Naive thymus-derived CD4-positive, alpha-beta T cell (primary cell): ENCODE measurements at regions of chr6 and their contacts with region 1.

Region 1: GRCh38 chr6:149368065-149368464 is 32.0 kb upstream of the SUMO4 start:
- DNase-seq: no peak
- ATAC-seq: no peak
- H3K4me3 ChIP-seq: no peak overlapping the region
- H3K4me3 Mint-ChIP-seq: no peak overlapping the region
- H3K27ac ChIP-seq: peak overlapping the region; percentile 21
- H3K27ac Mint-ChIP-seq: no peak overlapping the region
- H3K4me1 ChIP-seq: peaks cover 40 to 57% of the 10 kb centered on the region in 2 donors
- H3K4me1 Mint-ChIP-seq: peaks cover 28 to 44% (median 30%) of the 10 kb centered on the region in 7 donors
- H3K27me3 ChIP-seq: no peaks in the 10 kb centered on the region
- H3K27me3 Mint-ChIP-seq: no peaks in the 10 kb centered on the region

Region 2: DNA sequence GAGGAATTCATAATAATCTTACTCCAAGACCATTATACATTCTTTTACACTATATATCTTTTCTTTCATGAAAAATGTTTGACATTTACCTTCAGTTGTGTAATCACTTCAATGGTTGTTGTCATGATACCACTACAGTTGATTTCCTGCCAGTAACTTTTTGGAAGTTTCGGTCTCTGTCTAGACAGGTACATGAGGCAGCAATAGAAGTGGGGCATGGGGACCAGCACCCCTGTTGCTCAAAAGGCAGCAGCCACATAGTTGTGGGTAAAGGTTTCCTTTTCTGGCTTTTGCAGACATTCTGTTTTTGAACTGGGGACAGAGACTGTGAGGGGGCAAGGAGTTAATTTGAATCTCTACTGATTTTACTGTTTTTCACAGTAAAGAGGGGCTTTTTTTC is 1845.5 kb before region 1 on chr6:
- CTCF ChIA-PET with region 1: no interaction called
- POLR2A ChIA-PET with region 1: no interaction called
- intact Hi-C with region 1: no loop called
- DNase-seq: no peak
- ATAC-seq: no peak
- H3K4me3 ChIP-seq: no peak overlapping the region
- H3K4me3 Mint-ChIP-seq: no peak overlapping the region
- H3K27ac ChIP-seq: no peak overlapping the region
- H3K27ac Mint-ChIP-seq: no peak overlapping the region
- H3K4me1 ChIP-seq: no peaks in the 10 kb centered on the region
- H3K4me1 Mint-ChIP-seq: peaks cover 0 to 2% (median 0%) of the 10 kb centered on the region in 7 donors
- H3K27me3 ChIP-seq: peaks cover 0 to 6% of the 10 kb centered on the region in 2 donors
- H3K27me3 Mint-ChIP-seq: peaks cover 5 to 39% (median 30%) of the 10 kb centered on the region in 5 donors

Region 3: GRCh38 chr6:149306967-149307366 is 61.1 kb before region 1 on chr6:
- CTCF ChIA-PET with region 1: no interaction called
- POLR2A ChIA-PET with region 1: no interaction called
- intact Hi-C with region 1: no loop called
- DNase-seq: no peak
- ATAC-seq: no peak
- H3K4me3 ChIP-seq: no peak overlapping the region
- H3K4me3 Mint-ChIP-seq: no peak overlapping the region
- H3K27ac ChIP-seq: no peak overlapping the region
- H3K27ac Mint-ChIP-seq: no peak overlapping the region
- H3K4me1 ChIP-seq: no peaks in the 10 kb centered on the region
- H3K4me1 Mint-ChIP-seq: peaks cover 0 to 8% (median 0%) of the 10 kb centered on the region in 7 donors
- H3K27me3 ChIP-seq: no peaks in the 10 kb centered on the region
- H3K27me3 Mint-ChIP-seq: no peaks in the 10 kb centered on the region

Region 4: GRCh38 chr6:149342525-149342924 is 25.5 kb before region 1 on chr6:
- CTCF ChIA-PET with region 1: interaction called, 3 read pairs
- POLR2A ChIA-PET with region 1: interaction called, 4 read pairs
- intact Hi-C with region 1: loop called in 1 of 2 experiments (anchors 2 kb)
- DNase-seq: no peak
- ATAC-seq: peak; percentile 37
- H3K4me3 ChIP-seq: no peak overlapping the region
- H3K4me3 Mint-ChIP-seq: peak overlapping the region in 7 of 10 donors; percentile 4 to 69 (median 35)
- H3K27ac ChIP-seq: no peak overlapping the region
- H3K27ac Mint-ChIP-seq: peak overlapping the region in 7 of 9 donors; percentile 58 to 80 (median 71)
- H3K4me1 ChIP-seq: peaks cover 24 to 30% of the 10 kb centered on the region in 2 donors
- H3K4me1 Mint-ChIP-seq: peaks cover 47 to 94% (median 86%) of the 10 kb centered on the region in 7 donors
- H3K27me3 ChIP-seq: no peaks in the 10 kb centered on the region
- H3K27me3 Mint-ChIP-seq: no peaks in the 10 kb centered on the region

Region 5: GRCh38 chr6:149357726-149358538 is 10.1 kb before region 1 on chr6:
- CTCF ChIA-PET with region 1: no interaction called
- POLR2A ChIA-PET with region 1: no interaction called
- intact Hi-C with region 1: loop called in 1 of 2 experiments (anchors 1 kb)
- DNase-seq: no peak
- ATAC-seq: no peak
- H3K4me3 ChIP-seq: no peak overlapping the region
- H3K4me3 Mint-ChIP-seq: peak overlapping the region in 7 of 10 donors; percentile 1 to 52 (median 34)
- H3K27ac ChIP-seq: no peak overlapping the region
- H3K27ac Mint-ChIP-seq: peak overlapping the region in 7 of 9 donors; percentile 1 to 79 (median 64)
- H3K4me1 ChIP-seq: peaks cover 12 to 18% of the 10 kb centered on the region in 2 donors
- H3K4me1 Mint-ChIP-seq: peaks cover 39 to 86% (median 75%) of the 10 kb centered on the region in 7 donors
- H3K27me3 ChIP-seq: no peaks in the 10 kb centered on the region
- H3K27me3 Mint-ChIP-seq: no peaks in the 10 kb centered on the region

Region 6: GRCh38 chr6:149385998-149386646 is 18.1 kb after region 1 on chr6:
- CTCF ChIA-PET with region 1: no interaction called
- POLR2A ChIA-PET with region 1: interaction called, 3 read pairs
- intact Hi-C with region 1: loop called in 1 of 2 experiments (anchors 2 kb)
- DNase-seq: peak in 1 of 9 donors; percentile 8
- ATAC-seq: peak; percentile 44
- H3K4me3 ChIP-seq: no peak overlapping the region
- H3K4me3 Mint-ChIP-seq: peak overlapping the region in 4 of 10 donors; percentile 15 to 45 (median 34)
- H3K27ac ChIP-seq: no peak overlapping the region
- H3K27ac Mint-ChIP-seq: peak overlapping the region in 5 of 9 donors; percentile 2 to 65 (median 53)
- H3K4me1 ChIP-seq: peaks cover 0 to 6% of the 10 kb centered on the region in 2 donors
- H3K4me1 Mint-ChIP-seq: peaks cover 25 to 75% (median 61%) of the 10 kb centered on the region in 7 donors
- H3K27me3 ChIP-seq: no peaks in the 10 kb centered on the region
- H3K27me3 Mint-ChIP-seq: no peaks in the 10 kb centered on the region

Region 7: GRCh38 chr6:149400050-149400449 is 32.0 kb after region 1 on chr6 and contains the start of gene SUMO4:
- CTCF ChIA-PET with region 1: no interaction called
- POLR2A ChIA-PET with region 1: no interaction called
- intact Hi-C with region 1: no loop called
- DNase-seq: no peak
- ATAC-seq: no peak
- H3K4me3 ChIP-seq: no peak within 1 kb of the TSS
- H3K4me3 Mint-ChIP-seq: no peak within 1 kb of the TSS
- H3K27ac ChIP-seq: no peak within 1 kb of the TSS
- H3K27ac Mint-ChIP-seq: peak within 1 kb of the TSS in 4 of 9 donors; percentile 8 to 37 (median 19)
- H3K4me1 ChIP-seq: no peaks in the 10 kb centered on the region
- H3K4me1 Mint-ChIP-seq: peaks cover 10 to 54% (median 18%) of the 10 kb centered on the region in 7 donors
- H3K27me3 ChIP-seq: no peaks in the 10 kb centered on the region
- H3K27me3 Mint-ChIP-seq: no peaks in the 10 kb centered on the region
- total RNA-seq, gene SUMO4: 5.0 to 19.9 (median 7.4) TPM